Right ventricle myocardium inferior (tissue), 1 donor: ENCODE measurements at regions of chr16 and their contacts with region 1.

Region 1: DNA sequence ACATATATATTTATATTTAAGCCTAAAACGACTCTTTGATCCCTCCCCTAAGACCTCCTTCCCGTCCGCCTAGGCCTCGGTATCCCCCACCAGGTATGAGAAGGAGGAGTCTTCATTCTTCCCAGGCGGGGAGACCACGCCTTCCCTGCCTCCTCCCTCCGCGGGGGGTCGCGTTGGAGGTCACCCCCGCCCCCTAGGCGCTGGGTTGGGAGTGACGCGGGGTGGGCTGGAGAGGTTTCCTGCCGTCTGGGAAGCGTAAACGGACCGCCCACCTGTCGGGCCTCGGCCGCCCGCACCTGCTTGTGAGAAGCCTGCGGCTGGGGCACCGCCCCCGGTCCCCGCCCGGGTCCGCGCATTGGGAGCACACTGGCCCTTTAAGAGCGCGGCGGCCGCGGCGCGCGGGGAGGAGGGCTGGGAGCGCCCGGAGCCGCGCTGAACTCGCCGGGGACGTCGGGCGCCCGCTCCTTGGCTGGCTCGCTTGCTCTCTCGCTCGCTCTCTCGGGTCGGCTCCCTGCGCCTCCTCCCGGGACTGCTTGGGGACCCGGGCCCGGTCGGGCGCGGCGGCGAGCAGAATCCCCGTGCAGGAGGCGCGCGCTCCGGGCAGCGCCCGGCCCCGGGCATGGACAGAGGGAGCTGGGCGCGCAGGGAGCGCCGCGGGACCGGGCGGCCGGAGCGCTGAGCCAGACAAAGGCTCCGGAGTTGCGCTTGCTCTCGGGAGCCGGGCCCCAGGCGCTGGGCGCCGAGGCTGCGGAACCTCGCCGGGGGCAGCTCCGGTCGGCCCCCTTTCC is at the start of gene MMP15:
- DNase-seq: peak; percentile 87
- ATAC-seq: peak; percentile 69
- total RNA-seq, gene MMP15: 70.3 TPM

Region 2: DNA sequence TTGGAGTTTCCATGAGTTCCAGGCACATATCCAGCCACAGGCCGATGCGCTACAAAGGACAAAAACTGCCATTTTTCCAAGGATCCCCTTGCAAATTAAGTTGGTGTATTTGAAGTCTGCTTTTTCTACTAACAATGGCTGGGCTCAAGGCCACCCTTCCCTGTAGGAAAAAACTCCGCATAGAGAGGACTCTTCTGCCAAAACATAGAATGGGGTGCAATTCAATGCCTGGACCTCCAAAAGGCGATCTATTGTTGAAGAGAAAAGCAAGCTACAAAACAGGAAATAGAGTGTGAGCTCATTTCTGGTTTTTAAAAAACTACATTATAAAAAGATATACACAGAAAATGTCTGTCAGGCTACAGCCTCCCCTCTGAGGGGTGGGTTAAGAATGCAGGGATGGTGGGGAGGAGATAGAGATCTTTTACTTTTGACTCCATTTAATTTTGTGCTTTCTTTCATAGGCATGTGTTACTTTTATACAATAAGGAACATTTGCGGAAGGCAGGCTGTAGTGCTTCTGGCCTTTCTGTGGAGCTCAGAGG is 292.1 kb after region 1 on chr16:
- intact Hi-C with region 1: loop called (anchors 10 kb)
- DNase-seq: no peak
- ATAC-seq: no peak